ENCODE measurements at regions of chr17 and their contacts with region 1.

Region 1: DNA sequence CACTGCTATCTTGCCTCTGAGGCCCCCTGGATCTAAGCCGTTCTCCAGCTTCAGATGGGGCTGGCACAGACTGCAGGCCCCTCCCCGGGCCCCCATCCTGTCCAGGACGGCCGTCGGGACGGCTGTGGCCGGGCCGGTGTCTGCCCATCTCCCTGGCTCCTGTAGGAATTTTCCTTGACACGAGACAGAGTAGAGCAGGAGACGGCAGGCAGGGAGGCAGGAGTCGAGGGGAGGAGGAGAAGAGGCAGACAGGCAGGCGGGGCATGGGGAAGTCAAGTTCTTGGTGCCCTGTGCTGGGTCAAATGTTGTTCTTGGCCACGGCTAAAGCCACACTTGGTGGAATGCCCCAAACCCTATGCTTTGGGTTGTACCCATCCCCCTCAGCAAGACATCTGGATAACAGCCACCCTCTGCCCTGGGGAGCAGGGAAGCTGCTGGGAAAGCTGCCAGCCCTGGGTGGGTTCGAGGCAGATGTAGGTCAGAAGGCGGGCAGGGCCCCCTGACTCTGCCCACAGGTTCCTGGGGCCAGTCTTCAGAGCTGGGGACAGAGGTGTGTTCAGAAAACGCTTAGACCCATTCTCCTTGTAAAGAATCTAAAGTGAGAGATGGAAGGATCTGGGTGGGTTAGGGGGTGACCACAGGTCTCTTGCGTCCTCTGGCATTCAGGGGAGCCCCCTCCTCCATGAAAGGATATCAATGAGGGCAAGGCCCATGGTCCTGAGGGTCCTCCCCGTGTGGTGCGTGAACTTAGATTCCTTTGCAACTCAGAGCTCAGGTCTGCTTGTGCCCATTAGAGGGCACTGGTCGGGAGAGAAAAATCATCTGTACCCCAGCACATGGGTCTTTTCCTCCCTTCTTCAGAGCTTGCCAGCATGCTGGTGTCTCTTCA is 4.2 kb downstream of the C1QTNF1 start:
- DNase-seq: peak; percentile 39
- ATAC-seq: peak; percentile 28
- H3K4me3 ChIP-seq: peak overlapping the region; percentile 56 to 82 (median 57); a peak in 5 of 6 replicates
- H3K27ac ChIP-seq: peak overlapping the region; percentile 95
- H3K4me1 ChIP-seq: peaks cover 71% of the 10 kb centered on the region
- H3K27me3 ChIP-seq: peaks cover 0 to 22% of the 10 kb centered on the region in 2 experiments; a peak in 2 of 5 replicates
- CTCF ChIP-seq: peak; percentile 55
- EP300 ChIP-seq: no peak; a peak in 1 of 4 replicates
- POLR2A ChIP-seq: no peak
- RAD21 ChIP-seq: no peak

Region 2: DNA sequence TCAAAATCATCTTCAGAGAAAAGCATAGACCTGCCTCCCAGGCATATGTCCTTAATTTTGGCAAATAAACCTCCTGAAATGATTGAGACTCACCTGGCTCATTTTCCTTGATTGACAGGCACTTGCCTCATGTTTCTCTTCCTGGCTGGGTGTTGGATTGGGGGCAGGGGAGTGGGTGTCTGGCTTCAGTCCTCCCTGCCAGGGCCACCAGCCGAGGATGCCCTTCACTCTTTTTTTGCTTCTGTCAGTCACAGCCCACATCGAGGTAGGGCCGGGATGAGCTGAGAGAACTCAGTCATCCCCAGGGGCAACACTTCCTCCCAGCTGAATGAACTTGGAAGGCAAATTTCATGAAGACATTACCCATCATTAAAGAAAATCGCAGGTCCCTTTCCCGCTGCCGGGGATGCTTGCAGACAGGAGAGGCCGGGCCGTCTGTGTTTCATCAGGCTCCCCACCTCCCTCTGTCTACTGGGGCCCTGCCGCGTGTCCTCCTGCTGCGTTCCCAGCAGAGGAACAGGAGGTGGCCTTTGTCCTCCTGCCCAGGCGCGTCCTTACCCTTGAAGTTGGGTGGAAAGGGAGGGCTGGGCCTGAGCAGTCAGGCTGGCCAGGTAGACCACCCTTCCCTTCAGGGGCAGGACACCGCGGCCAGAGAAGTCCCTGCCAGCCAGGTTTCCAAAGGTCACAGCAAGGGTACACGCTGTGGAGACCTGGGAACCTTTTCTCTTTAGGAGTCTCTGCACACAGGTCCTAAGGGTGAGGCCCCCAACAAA is 439.7 kb before region 1 on chr17:
- CTCF ChIA-PET with region 1: no interaction called
- POLR2A ChIA-PET with region 1: interaction called, 10 read pairs
- in situ Hi-C with region 1: no loop called
- intact Hi-C with region 1: no loop called
- DNase-seq: peak; percentile 54
- ATAC-seq: peak; percentile 73
- H3K4me3 ChIP-seq: peak overlapping the region; percentile 14 to 61 (median 40); a peak in 5 of 6 replicates
- H3K27ac ChIP-seq: peak overlapping the region; percentile 19
- H3K4me1 ChIP-seq: peaks cover 86% of the 10 kb centered on the region
- H3K27me3 ChIP-seq: no peaks in the 10 kb centered on the region
- CTCF ChIP-seq: no peak; the same call in none of the 2 replicates
- EP300 ChIP-seq: no peak; a peak in 1 of 4 replicates
- POLR2A ChIP-seq: peak in 1 of 2 experiments; percentile 27; a peak in 1 of 4 replicates
- RAD21 ChIP-seq: peak; percentile 31

Region 3: DNA sequence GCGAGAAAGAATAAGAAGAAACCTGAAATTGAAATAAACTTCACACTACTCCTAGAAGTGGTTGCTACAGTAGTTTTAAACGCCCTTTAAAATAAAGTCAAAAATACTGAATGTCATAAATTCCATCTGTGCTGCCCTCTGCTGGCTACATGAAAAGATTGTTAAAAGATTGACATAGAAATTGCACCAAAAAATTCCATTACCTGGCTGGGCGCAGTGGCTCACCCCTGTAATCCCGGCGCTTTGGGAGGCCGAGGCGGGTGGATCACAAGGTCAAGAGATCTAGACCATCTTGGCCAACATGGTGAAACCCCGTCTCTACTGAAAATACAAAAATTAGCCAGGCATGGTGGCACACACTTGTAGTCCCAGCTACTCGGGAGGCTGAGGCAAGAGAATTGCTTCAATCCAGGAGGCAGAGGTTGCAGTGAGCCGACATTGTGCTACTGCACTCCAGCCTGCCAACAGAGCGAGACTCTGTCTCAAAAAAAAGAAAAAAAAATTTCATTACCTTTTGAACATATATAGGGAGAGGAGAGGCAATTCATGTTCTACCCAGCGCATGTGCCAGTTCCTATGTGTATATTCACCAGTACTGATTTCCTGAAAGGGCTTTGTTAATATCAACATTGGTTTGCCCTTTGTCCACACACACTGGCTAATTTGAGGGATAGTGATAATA is 282.6 kb before region 1 on chr17:
- CTCF ChIA-PET with region 1: no interaction called
- POLR2A ChIA-PET with region 1: no interaction called
- in situ Hi-C with region 1: no loop called
- intact Hi-C with region 1: no loop called
- DNase-seq: peak; percentile 52
- ATAC-seq: no peak
- H3K4me3 ChIP-seq: no peak overlapping the region
- H3K27ac ChIP-seq: peak overlapping the region; percentile 93
- H3K4me1 ChIP-seq: peaks cover 65% of the 10 kb centered on the region
- H3K27me3 ChIP-seq: no peaks in the 10 kb centered on the region
- CTCF ChIP-seq: peak; percentile 66
- EP300 ChIP-seq: no peak
- POLR2A ChIP-seq: no peak
- RAD21 ChIP-seq: peak; percentile 34; the same call in 1 of the 2 replicates

Region 4: GRCh38 chr17:78933959-78934568 is 94.1 kb before region 1 on chr17:
- CTCF ChIA-PET with region 1: no interaction called
- POLR2A ChIA-PET with region 1: interaction called, 16 read pairs
- in situ Hi-C with region 1: no loop called
- intact Hi-C with region 1: no loop called
- DNase-seq: peak; percentile 77
- ATAC-seq: peak; percentile 32
- H3K4me3 ChIP-seq: peak overlapping the region in 2 of 3 experiments; percentile 2 to 61; a peak in 3 of 6 replicates
- H3K27ac ChIP-seq: no peak overlapping the region
- H3K4me1 ChIP-seq: peaks cover 41% of the 10 kb centered on the region
- H3K27me3 ChIP-seq: peaks cover 10 to 54% of the 10 kb centered on the region in 2 experiments; a peak in 4 of 5 replicates
- CTCF ChIP-seq: no peak
- EP300 ChIP-seq: no peak
- POLR2A ChIP-seq: no peak
- RAD21 ChIP-seq: no peak

Region 5: GRCh38 chr17:78979780-78980623 is 48.2 kb before region 1 on chr17 and contains the start of gene LGALS3BP:
- CTCF ChIA-PET with region 1: no interaction called
- POLR2A ChIA-PET with region 1: interaction called, 49 read pairs
- in situ Hi-C with region 1: no loop called
- intact Hi-C with region 1: loop called (anchors 5 kb)
- DNase-seq: peak; percentile 97
- ATAC-seq: peak; percentile 92
- H3K4me3 ChIP-seq: peak within 1 kb of the TSS; percentile 73 to 84 (median 81)
- H3K27ac ChIP-seq: peak within 1 kb of the TSS; percentile 88
- H3K4me1 ChIP-seq: peaks cover 55% of the 10 kb centered on the region
- H3K27me3 ChIP-seq: no peaks in the 10 kb centered on the region; a peak in 1 of 5 replicates
- CTCF ChIP-seq: peak; percentile 38
- EP300 ChIP-seq: no peak
- POLR2A ChIP-seq: peak; percentile 97 to 98
- RAD21 ChIP-seq: no peak; the same call in 1 of the 2 replicates
- total RNA-seq, gene LGALS3BP: 116 and 332 TPM in 2 replicates

Region 6: DNA sequence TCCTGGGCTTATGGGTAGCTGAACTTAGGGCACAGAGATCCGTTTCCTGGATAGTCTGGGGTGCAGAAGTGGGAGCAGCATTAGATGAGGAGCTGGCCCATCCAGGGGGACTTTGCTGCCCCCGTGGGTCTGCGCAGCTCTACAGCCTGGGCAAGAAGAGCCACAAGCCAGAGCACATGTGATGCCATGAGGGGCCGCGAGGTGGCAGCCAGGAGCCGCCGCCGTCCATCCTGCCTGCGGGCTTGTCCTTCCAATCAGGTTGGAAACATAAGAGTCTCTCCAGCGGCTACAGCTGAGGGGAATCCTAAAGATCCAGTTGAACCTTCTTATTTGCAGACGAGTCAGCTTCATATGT is 17.6 kb after region 1 on chr17:
- CTCF ChIA-PET with region 1: interaction called, 3 read pairs
- POLR2A ChIA-PET with region 1: interaction called, 127 read pairs
- in situ Hi-C with region 1: no loop called
- intact Hi-C with region 1: no loop called
- DNase-seq: peak; percentile 71
- ATAC-seq: peak; percentile 86
- H3K4me3 ChIP-seq: no peak overlapping the region
- H3K27ac ChIP-seq: no peak overlapping the region
- H3K4me1 ChIP-seq: peaks cover 29% of the 10 kb centered on the region
- H3K27me3 ChIP-seq: peaks cover 20 to 74% of the 10 kb centered on the region in 2 experiments; a peak in 4 of 5 replicates
- CTCF ChIP-seq: peak; percentile 96
- EP300 ChIP-seq: no peak
- POLR2A ChIP-seq: no peak
- RAD21 ChIP-seq: peak; percentile 92